Endothelial cell of umbilical vein (primary cell): ENCODE measurements at regions of chr11 and their contacts with region 1.

Region 1: DNA sequence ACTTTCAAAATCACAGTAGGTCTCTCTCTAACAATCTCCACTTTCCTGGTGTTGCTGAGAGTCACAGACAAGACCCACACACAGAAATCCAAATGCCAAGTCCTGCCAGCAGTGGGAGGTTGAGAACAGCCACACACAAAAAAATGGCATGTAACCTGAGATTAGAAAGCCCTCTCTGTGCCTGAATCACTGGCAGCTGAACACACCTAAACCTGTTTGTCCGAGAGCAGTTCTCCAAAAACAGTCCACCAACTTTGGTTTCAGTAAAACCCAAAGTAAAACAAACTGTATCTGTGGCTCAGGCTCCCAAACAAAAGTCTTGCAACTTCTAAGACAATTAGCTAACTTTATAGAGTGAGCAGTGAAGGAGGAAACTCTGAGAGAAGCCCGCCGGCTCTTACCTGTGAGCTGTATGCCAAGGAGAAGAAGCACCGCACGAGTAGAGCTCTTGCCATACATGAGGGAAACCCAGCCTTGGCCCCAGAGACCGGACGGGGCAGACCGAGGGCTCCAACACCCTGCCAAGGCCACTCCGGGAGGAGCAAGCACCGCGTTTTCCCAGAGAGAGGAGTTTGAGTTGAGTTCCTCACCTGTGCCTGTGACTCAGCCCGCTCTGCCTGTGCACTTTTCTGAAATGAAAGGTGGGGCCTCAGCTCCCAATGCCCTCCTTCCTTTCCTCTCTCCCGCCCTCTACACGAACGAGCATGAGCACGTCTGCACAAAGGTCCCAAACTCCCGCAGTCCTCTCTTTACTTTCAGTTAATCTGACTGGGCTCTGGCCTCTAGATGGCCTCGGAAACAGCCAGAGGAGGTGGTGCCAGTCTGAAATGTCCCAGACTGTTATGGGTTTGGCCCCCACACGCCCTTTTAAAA is at the start of gene MPZL2:
- DNase-seq: peak; percentile 57
- H3K4me3 ChIP-seq: peak within 1 kb of the TSS; percentile 13 to 69 (median 44)
- H3K27ac ChIP-seq: peak within 1 kb of the TSS; percentile 4
- H3K4me1 ChIP-seq: peaks cover 51% of the 10 kb centered on the region
- H3K27me3 ChIP-seq: no peaks in the 10 kb centered on the region
- CTCF ChIP-seq: no peak
- POLR2A ChIP-seq: peak; percentile 68
- total RNA-seq, gene MPZL2: 37.1 and 49.5 TPM in 2 replicates

Region 2: DNA sequence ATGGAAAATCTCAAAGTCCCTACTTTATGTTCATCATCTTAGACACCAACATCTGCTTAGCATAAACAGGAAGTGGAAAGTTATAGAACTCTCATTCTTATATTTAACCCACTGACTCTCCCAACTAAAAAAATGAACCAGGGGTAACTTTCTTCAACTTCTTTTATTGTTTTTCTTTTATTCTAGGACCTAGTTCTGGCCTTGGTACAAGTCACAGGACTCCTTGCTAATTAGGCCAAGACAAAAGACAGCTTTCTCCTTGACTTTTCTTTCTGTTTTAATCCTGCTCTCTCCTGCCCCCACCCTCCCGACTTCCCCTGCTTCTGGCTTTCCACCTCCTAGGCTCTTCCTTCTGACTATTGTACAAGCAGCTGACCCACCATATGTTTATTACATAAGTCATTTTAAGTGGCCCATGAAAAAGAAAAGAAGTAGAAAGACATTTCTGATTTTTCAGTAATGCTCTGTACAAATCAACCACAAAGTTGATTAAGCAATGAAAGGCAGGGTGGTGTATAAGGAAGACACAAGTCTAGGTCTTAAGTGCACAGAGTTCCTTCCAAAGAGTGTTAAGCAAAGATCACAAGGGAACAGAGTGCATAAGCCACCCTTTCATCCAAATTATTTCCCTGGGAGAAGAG is 57.4 kb before region 1 on chr11:
- CTCF ChIA-PET with region 1: interaction called, 4 read pairs
- POLR2A ChIA-PET with region 1: no interaction called
- dilution Hi-C with region 1: no loop called
- intact Hi-C with region 1: loop called (anchors 2 kb)
- DNase-seq: peak; percentile 85
- H3K4me3 ChIP-seq: no peak overlapping the region
- H3K27ac ChIP-seq: peak overlapping the region; percentile 19
- H3K4me1 ChIP-seq: peaks cover 15% of the 10 kb centered on the region
- H3K27me3 ChIP-seq: peaks cover 2 to 7% of the 10 kb centered on the region in 2 experiments
- CTCF ChIP-seq: no peak
- POLR2A ChIP-seq: no peak

Region 3: DNA sequence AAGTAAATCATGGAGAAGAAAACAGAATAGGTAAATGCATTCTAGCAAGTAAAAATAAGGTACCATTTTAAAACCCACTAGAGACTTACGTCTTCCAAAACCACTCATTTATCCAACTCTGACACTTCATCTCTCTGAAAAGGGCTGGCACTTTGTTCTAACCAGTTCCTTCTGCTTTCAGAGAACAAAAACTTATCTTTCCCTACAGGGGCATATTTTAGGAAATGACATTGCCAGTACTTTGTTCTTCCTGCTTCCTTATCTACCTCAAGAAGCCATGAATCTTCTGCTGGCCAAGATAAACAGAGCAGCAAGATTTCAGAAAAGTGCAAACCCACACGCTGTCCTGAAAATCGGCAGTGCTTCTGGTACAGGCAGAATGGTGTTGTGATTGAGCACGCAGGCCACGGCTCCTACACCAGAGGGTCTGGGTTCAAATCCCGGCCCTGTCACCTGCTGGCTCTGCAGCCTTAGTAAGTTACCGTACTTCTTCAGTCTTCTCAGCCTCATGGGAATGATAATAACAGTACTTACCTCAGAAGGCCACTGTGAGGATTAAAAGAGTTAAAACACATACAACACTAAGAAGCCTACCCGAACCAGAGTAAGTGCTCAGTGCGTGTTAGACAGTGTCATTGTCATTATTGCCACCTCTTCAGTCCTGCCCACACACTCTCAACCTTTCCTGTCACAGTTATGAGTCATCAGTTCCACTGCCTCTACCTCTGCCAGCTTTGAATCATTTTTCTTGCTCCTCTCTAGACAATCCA is 22.7 kb before region 1 on chr11:
- CTCF ChIA-PET with region 1: interaction called, 4 read pairs
- POLR2A ChIA-PET with region 1: no interaction called
- dilution Hi-C with region 1: no loop called
- intact Hi-C with region 1: loop called (anchors 1 kb)
- DNase-seq: peak; percentile 93
- H3K4me3 ChIP-seq: peak overlapping the region in 1 of 3 experiments; percentile 4
- H3K27ac ChIP-seq: peak overlapping the region; percentile 64
- H3K4me1 ChIP-seq: peaks cover 45% of the 10 kb centered on the region
- H3K27me3 ChIP-seq: no peaks in the 10 kb centered on the region
- CTCF ChIP-seq: no peak
- POLR2A ChIP-seq: peak; percentile 78

Region 4: GRCh38 chr11:118251858-118252652 is 11.9 kb before region 1 on chr11 and contains the start of gene MPZL3:
- CTCF ChIA-PET with region 1: interaction called, 4 read pairs
- POLR2A ChIA-PET with region 1: no interaction called
- dilution Hi-C with region 1: no loop called
- intact Hi-C with region 1: loop called (anchors 1 kb)
- DNase-seq: peak; percentile 78
- H3K4me3 ChIP-seq: peak within 1 kb of the TSS; percentile 40 to 95 (median 85)
- H3K27ac ChIP-seq: peak within 1 kb of the TSS; percentile 62
- H3K4me1 ChIP-seq: peaks cover 15% of the 10 kb centered on the region
- H3K27me3 ChIP-seq: no peaks in the 10 kb centered on the region
- CTCF ChIP-seq: no peak
- POLR2A ChIP-seq: peak; percentile 66
- total RNA-seq, gene MPZL3: 7.0 and 7.1 TPM in 2 replicates

Region 5: DNA sequence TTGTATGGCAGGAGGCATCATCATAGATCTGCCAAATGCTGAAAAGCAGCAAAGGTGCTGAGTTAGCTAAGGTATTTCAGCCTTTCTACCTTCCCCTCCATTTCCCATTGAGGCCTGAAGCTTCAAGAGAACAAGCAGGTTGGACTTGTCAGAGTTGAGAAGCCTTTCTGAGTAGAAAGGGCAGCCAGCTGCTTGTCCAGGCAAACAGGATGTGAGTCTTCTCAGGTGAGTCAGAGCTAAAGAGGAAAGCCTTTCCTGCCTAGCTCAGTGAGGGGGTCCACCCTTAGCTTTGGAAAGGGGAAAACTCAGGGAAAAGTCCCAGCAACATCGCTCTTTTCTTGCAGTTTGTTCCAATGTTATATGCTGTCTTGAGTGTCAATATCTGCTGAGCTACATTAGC is 13.4 kb after region 1 on chr11:
- CTCF ChIA-PET with region 1: interaction called, 43 read pairs
- POLR2A ChIA-PET with region 1: interaction called, 12 read pairs
- dilution Hi-C with region 1: no loop called
- intact Hi-C with region 1: loop called (anchors 1 kb)
- DNase-seq: peak; percentile 83
- H3K4me3 ChIP-seq: no peak overlapping the region
- H3K27ac ChIP-seq: peak overlapping the region; percentile 72
- H3K4me1 ChIP-seq: peaks cover 42% of the 10 kb centered on the region
- H3K27me3 ChIP-seq: no peaks in the 10 kb centered on the region
- CTCF ChIP-seq: no peak
- POLR2A ChIP-seq: no peak

Region 6: DNA sequence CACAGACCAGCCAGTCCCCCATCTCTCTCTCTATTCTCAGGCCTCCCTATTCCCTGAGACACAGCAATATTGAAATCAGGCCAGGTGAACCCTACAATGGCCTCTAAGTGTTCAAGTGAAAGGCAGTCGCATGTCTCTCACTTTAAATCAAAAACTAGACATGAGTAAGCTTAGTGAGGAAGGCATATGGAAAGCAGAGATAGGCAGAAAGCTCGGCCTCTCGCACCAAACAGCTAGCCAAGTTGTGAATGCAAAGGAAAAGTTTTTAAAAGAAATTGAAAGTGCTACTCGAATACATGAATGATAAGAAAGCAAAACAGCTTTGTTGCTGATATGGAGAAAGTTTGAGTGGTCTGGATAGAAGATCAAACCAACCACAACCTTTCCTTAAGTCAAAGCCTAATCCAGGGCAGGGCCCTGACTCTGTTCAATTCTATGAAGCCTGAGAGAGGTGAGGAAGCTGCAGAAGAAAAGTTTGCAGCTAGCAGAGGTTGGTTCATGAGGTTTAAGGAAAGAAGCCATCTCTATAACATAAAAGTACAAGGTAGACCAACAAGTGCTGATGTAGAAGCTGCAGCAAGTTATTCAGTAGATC is 19.9 kb after region 1 on chr11:
- CTCF ChIA-PET with region 1: interaction called, 43 read pairs
- POLR2A ChIA-PET with region 1: no interaction called
- dilution Hi-C with region 1: no loop called
- intact Hi-C with region 1: no loop called
- DNase-seq: no peak
- H3K4me3 ChIP-seq: no peak overlapping the region
- H3K27ac ChIP-seq: no peak overlapping the region
- H3K4me1 ChIP-seq: no peaks in the 10 kb centered on the region
- H3K27me3 ChIP-seq: no peaks in the 10 kb centered on the region
- CTCF ChIP-seq: no peak
- POLR2A ChIP-seq: no peak

Region 7: GRCh38 chr11:118290923-118291322 is 27.0 kb after region 1 on chr11:
- CTCF ChIA-PET with region 1: interaction called, 20 read pairs
- POLR2A ChIA-PET with region 1: no interaction called
- dilution Hi-C with region 1: no loop called
- intact Hi-C with region 1: loop called (anchors 1 kb)
- DNase-seq: peak; percentile 68
- H3K4me3 ChIP-seq: no peak overlapping the region
- H3K27ac ChIP-seq: no peak overlapping the region
- H3K4me1 ChIP-seq: no peaks in the 10 kb centered on the region
- H3K27me3 ChIP-seq: no peaks in the 10 kb centered on the region
- CTCF ChIP-seq: peak; percentile 30 to 53
- POLR2A ChIP-seq: no peak

Region 8: DNA sequence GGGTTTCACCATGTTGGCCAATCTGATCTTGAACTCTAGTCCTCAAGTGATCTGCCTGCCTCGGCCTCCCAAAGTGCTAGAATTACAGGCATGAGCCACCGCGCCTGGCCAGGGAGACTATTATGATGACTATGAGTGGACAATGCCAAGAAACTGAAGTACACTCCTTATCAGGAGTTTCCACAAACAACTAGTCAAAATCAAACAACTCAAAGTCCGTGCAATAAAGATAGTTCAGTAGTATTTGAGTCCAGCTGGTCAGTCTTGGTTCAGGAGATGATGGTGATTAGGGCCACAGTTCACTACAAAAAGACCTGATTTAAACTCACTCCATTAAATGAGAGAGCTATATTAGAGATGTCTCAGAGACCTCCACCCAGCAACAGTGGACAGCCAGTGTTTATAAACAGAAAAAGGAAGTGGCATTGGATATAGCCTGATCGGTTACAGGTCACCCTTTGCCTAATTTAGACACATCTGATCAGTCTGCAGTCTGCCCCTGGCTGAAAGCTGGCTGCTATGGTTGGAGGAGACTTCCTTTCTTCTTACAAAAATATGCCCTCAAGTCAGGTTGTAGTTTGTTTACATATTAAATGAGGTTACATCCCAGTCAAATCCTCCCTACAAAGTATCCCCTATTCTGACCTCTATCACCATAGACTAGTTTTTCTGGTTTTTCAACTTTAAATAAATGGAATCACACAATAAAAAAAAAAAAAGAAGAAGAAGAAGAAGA is 57.6 kb after region 1 on chr11:
- CTCF ChIA-PET with region 1: no interaction called
- POLR2A ChIA-PET with region 1: no interaction called
- dilution Hi-C with region 1: no loop called
- intact Hi-C with region 1: no loop called
- DNase-seq: no peak
- H3K4me3 ChIP-seq: no peak overlapping the region
- H3K27ac ChIP-seq: no peak overlapping the region
- H3K4me1 ChIP-seq: no peaks in the 10 kb centered on the region
- H3K27me3 ChIP-seq: peaks cover 1 to 11% of the 10 kb centered on the region in 2 experiments
- CTCF ChIP-seq: no peak
- POLR2A ChIP-seq: no peak